ENCODE measurements at regions of chr1 and their contacts with region 1.

Region 1: GRCh38 chr1:234978397-234979295 is 150.0 kb downstream of the TOMM20 start:
- DNase-seq: peak in 13 of 14 experiments; percentile 30 to 89 (median 55)
- ATAC-seq: peak; percentile 79
- H3K4me3 ChIP-seq: no peak overlapping the region
- H3K4me3 Mint-ChIP-seq: peak overlapping the region; percentile 82
- H3K27ac ChIP-seq: peak overlapping the region; percentile 63 to 72
- H3K27ac Mint-ChIP-seq: peak overlapping the region; percentile 93
- H3K4me1 ChIP-seq: peaks cover 53% of the 10 kb centered on the region
- H3K4me1 Mint-ChIP-seq: peaks cover 65% of the 10 kb centered on the region
- H3K27me3 ChIP-seq: no peaks in the 10 kb centered on the region
- H3K27me3 Mint-ChIP-seq: no peaks in the 10 kb centered on the region
- CTCF ChIP-seq: peak; percentile 18

Region 2: DNA sequence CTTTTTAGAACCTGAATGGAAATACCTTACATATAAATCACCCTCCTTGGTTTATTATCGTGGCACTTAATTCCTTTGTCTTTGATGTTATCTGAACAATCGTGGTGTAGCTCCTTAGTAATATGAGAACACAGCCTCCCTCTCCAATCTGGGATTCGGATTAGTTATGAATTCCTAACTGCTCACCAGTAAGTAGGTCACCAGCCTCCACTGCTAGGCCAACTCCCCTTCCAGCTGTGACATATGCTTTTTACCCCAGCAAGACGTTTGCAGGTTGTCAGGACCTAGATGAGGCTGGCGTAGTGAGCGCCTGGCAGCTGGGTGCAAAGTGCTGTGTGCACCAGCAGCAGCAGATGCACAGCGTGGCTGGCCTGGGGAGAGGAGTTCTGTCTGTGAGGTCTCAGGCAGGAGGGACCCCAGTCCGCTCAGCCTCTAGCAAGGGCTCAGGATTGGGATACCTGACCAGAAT is 1990.0 kb before region 1 on chr1:
- CTCF ChIA-PET with region 1: no interaction called
- POLR2A ChIA-PET with region 1: no interaction called
- intact Hi-C with region 1: no loop called
- DNase-seq: no peak
- ATAC-seq: no peak
- H3K4me3 ChIP-seq: no peak overlapping the region
- H3K4me3 Mint-ChIP-seq: no peak overlapping the region
- H3K27ac ChIP-seq: no peak overlapping the region
- H3K27ac Mint-ChIP-seq: no peak overlapping the region
- H3K4me1 ChIP-seq: no peaks in the 10 kb centered on the region
- H3K4me1 Mint-ChIP-seq: no peaks in the 10 kb centered on the region
- H3K27me3 ChIP-seq: no peaks in the 10 kb centered on the region
- H3K27me3 Mint-ChIP-seq: no peaks in the 10 kb centered on the region
- CTCF ChIP-seq: no peak

Region 3: GRCh38 chr1:234659538-234659937 is 319.1 kb before region 1 on chr1:
- CTCF ChIA-PET with region 1: no interaction called
- POLR2A ChIA-PET with region 1: no interaction called
- intact Hi-C with region 1: no loop called
- DNase-seq: peak in 2 of 14 experiments; percentile 21 to 51
- ATAC-seq: no peak
- H3K4me3 ChIP-seq: no peak overlapping the region
- H3K4me3 Mint-ChIP-seq: no peak overlapping the region
- H3K27ac ChIP-seq: no peak overlapping the region
- H3K27ac Mint-ChIP-seq: no peak overlapping the region
- H3K4me1 ChIP-seq: no peaks in the 10 kb centered on the region
- H3K4me1 Mint-ChIP-seq: no peaks in the 10 kb centered on the region
- H3K27me3 ChIP-seq: no peaks in the 10 kb centered on the region
- H3K27me3 Mint-ChIP-seq: no peaks in the 10 kb centered on the region
- CTCF ChIP-seq: no peak

Region 4: GRCh38 chr1:234691567-234691966 is 287.1 kb before region 1 on chr1:
- CTCF ChIA-PET with region 1: no interaction called
- POLR2A ChIA-PET with region 1: no interaction called
- intact Hi-C with region 1: no loop called
- DNase-seq: peak in 3 of 14 experiments; percentile 19 to 53 (median 50)
- ATAC-seq: peak; percentile 76
- H3K4me3 ChIP-seq: no peak overlapping the region
- H3K4me3 Mint-ChIP-seq: no peak overlapping the region
- H3K27ac ChIP-seq: no peak overlapping the region
- H3K27ac Mint-ChIP-seq: no peak overlapping the region
- H3K4me1 ChIP-seq: no peaks in the 10 kb centered on the region
- H3K4me1 Mint-ChIP-seq: peaks cover 5% of the 10 kb centered on the region
- H3K27me3 ChIP-seq: no peaks in the 10 kb centered on the region
- H3K27me3 Mint-ChIP-seq: no peaks in the 10 kb centered on the region
- CTCF ChIP-seq: peak; percentile 35

Region 5: GRCh38 chr1:234925440-234926263 is 53.0 kb before region 1 on chr1:
- CTCF ChIA-PET with region 1: interaction called, 3 read pairs
- POLR2A ChIA-PET with region 1: interaction called, 11 read pairs
- intact Hi-C with region 1: no loop called
- DNase-seq: peak in 4 of 14 experiments; percentile 48 to 67 (median 62)
- ATAC-seq: peak; percentile 58
- H3K4me3 ChIP-seq: peak overlapping the region; percentile 43
- H3K4me3 Mint-ChIP-seq: peak overlapping the region; percentile 42
- H3K27ac ChIP-seq: no peak overlapping the region
- H3K27ac Mint-ChIP-seq: peak overlapping the region; percentile 76
- H3K4me1 ChIP-seq: peaks cover 60% of the 10 kb centered on the region
- H3K4me1 Mint-ChIP-seq: peaks cover 55% of the 10 kb centered on the region
- H3K27me3 ChIP-seq: no peaks in the 10 kb centered on the region
- H3K27me3 Mint-ChIP-seq: no peaks in the 10 kb centered on the region
- CTCF ChIP-seq: no peak

Region 6: GRCh38 chr1:234938924-234939323 is 39.7 kb before region 1 on chr1:
- CTCF ChIA-PET with region 1: no interaction called
- POLR2A ChIA-PET with region 1: no interaction called
- intact Hi-C with region 1: no loop called
- DNase-seq: no peak
- ATAC-seq: no peak
- H3K4me3 ChIP-seq: no peak overlapping the region
- H3K4me3 Mint-ChIP-seq: no peak overlapping the region
- H3K27ac ChIP-seq: no peak overlapping the region
- H3K27ac Mint-ChIP-seq: no peak overlapping the region
- H3K4me1 ChIP-seq: no peaks in the 10 kb centered on the region
- H3K4me1 Mint-ChIP-seq: no peaks in the 10 kb centered on the region
- H3K27me3 ChIP-seq: no peaks in the 10 kb centered on the region
- H3K27me3 Mint-ChIP-seq: no peaks in the 10 kb centered on the region
- CTCF ChIP-seq: no peak

Region 7: DNA sequence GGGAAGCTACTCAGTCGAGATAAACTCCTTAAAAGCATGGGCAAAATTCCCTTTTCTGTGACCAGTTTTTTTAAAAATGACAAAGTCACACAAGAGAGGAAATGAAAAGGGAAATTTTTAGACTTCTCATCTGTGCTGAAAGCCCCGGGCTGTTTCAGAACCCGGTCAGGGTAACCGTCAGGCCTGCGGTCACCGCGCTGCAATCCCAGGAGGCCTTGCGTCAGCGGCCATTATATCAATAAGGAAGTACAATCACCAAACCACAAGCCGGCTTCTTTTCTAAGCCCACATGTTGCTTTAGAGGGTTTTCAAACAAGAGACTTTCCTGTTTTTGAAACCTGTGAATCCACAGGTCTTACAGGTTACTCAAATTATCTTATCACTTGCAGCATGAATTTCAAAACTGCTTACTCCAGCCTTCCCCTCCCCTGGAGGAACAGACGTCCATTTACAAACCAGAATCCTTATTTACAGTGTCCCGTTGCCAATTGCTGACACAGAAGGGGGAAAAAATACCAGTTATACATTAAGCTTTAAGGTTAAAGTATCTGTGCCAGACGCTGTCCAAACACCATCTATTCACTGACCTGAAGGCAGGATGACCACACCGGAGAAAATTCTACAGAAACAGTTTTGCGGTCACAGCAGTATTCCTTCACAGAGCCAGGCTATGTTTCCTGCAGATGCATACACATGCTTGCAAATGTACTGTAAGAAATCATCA is 15.3 kb before region 1 on chr1:
- CTCF ChIA-PET with region 1: interaction called, 6 read pairs
- POLR2A ChIA-PET with region 1: interaction called, 20 read pairs
- intact Hi-C with region 1: no loop called
- DNase-seq: peak; percentile 59 to 97 (median 78)
- ATAC-seq: peak; percentile 79
- H3K4me3 ChIP-seq: peak overlapping the region; percentile 25
- H3K4me3 Mint-ChIP-seq: peak overlapping the region; percentile 78
- H3K27ac ChIP-seq: peak overlapping the region; percentile 71 to 81
- H3K27ac Mint-ChIP-seq: peak overlapping the region; percentile 90
- H3K4me1 ChIP-seq: peaks cover 63% of the 10 kb centered on the region
- H3K4me1 Mint-ChIP-seq: peaks cover 66% of the 10 kb centered on the region
- H3K27me3 ChIP-seq: no peaks in the 10 kb centered on the region
- H3K27me3 Mint-ChIP-seq: no peaks in the 10 kb centered on the region
- CTCF ChIP-seq: no peak

Region 8: DNA sequence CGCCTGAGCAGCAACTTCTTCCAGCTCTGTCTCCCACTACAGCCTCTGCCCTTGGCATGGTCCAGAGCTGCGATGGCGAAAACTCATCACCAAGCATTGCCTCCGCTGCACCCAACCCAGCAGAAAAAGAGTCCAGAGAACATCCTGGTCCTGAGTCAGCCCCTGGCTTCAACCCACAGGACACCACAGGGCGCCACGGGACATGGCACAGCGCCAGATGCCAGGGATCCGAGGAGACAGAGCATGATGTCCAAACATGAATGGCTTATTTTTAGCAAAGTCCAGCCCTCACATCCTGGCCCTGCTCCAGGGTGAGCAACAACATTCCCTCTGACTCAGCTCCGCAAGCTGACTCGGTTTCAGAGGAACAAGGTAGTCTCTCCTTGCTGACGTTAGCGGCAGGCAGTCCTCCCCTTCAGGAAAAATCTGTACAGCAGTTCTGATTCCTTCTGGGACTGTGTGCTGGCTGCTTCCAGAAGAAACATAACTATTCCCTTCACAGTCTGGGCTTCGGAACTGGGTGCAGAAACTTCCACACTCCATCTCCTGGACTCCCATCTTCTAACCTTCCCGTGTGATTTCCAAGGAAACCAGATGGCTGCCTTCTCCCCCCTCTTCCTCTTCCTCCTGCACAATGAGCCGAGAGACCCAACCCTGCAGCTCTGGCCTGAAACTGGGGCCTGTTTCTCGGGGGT is 18.7 kb after region 1 on chr1:
- CTCF ChIA-PET with region 1: interaction called, 3 read pairs
- POLR2A ChIA-PET with region 1: no interaction called
- intact Hi-C with region 1: loop called in 1 of 2 experiments (anchors 2 kb)
- DNase-seq: no peak
- ATAC-seq: no peak
- H3K4me3 ChIP-seq: no peak overlapping the region
- H3K4me3 Mint-ChIP-seq: no peak overlapping the region
- H3K27ac ChIP-seq: no peak overlapping the region
- H3K27ac Mint-ChIP-seq: no peak overlapping the region
- H3K4me1 ChIP-seq: peaks cover 4% of the 10 kb centered on the region
- H3K4me1 Mint-ChIP-seq: no peaks in the 10 kb centered on the region
- H3K27me3 ChIP-seq: no peaks in the 10 kb centered on the region
- H3K27me3 Mint-ChIP-seq: no peaks in the 10 kb centered on the region
- CTCF ChIP-seq: no peak

Region 9: GRCh38 chr1:235075188-235075926 is 96.7 kb after region 1 on chr1:
- CTCF ChIA-PET with region 1: no interaction called
- POLR2A ChIA-PET with region 1: no interaction called
- intact Hi-C with region 1: loop called in 1 of 2 experiments (anchors 10 kb)
- DNase-seq: peak in 11 of 14 experiments; percentile 10 to 80 (median 29)
- ATAC-seq: peak; percentile 68
- H3K4me3 ChIP-seq: peak overlapping the region; percentile 15
- H3K4me3 Mint-ChIP-seq: no peak overlapping the region
- H3K27ac ChIP-seq: no peak overlapping the region
- H3K27ac Mint-ChIP-seq: peak overlapping the region; percentile 73
- H3K4me1 ChIP-seq: peaks cover 38% of the 10 kb centered on the region
- H3K4me1 Mint-ChIP-seq: peaks cover 16% of the 10 kb centered on the region
- H3K27me3 ChIP-seq: no peaks in the 10 kb centered on the region
- H3K27me3 Mint-ChIP-seq: no peaks in the 10 kb centered on the region
- CTCF ChIP-seq: no peak